CD4-positive, alpha-beta T cell (primary cell): ENCODE measurements at regions of chr2 and their contacts with region 1.

Region 1: DNA sequence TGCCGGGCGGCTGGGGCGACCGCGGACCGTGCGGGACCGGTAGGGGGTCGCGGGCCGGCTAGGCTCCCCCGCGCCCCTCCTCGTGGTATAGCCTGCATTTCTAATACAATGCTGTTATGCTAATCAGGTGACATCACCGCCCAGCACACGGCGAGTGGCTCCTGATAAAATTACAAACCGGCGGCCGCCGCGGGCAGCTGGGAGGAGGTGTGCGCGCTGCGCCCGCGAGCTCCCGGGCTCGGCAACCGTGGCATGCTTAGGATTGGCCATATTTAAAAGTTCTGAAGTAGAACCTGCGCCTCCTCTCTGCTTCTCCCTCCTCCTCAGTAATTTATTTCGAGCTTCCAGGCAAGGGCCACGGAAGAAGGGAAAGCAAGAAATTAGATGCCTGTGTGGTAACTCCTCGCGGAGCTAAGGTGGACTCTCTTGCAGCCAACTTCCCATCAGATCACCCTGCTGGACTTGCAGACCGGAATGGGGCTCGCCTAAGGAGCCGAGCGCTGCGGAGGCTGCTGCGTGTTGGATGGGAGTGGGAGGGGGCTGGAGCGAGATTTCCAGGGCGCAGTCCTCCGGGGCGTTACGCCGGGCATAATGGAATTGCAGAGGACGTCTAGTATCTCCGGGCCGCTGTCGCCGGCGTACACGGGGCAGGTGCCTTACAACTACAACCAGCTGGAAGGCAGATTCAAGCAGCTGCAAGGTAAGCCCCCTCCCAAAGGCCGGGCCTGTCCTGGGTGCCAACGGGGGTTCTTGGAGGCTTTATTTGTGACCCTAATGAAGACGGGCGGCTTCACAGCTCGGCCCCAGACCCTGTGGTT is 102.3 kb downstream of the SPTBN1 start:
- DNase-seq: peak; percentile 35 to 88 (median 62)
- ATAC-seq: peak; percentile 66
- H3K4me3 ChIP-seq: peak overlapping the region; percentile 72
- H3K4me3 Mint-ChIP-seq: peak overlapping the region; percentile 98
- H3K27ac ChIP-seq: peak overlapping the region; percentile 75 to 89
- H3K27ac Mint-ChIP-seq: peak overlapping the region; percentile 95
- H3K4me1 ChIP-seq: peaks cover 30% of the 10 kb centered on the region
- H3K4me1 Mint-ChIP-seq: peaks cover 72% of the 10 kb centered on the region
- H3K27me3 ChIP-seq: no peaks in the 10 kb centered on the region
- H3K27me3 Mint-ChIP-seq: no peaks in the 10 kb centered on the region
- CTCF ChIP-seq: no peak

Region 2: DNA sequence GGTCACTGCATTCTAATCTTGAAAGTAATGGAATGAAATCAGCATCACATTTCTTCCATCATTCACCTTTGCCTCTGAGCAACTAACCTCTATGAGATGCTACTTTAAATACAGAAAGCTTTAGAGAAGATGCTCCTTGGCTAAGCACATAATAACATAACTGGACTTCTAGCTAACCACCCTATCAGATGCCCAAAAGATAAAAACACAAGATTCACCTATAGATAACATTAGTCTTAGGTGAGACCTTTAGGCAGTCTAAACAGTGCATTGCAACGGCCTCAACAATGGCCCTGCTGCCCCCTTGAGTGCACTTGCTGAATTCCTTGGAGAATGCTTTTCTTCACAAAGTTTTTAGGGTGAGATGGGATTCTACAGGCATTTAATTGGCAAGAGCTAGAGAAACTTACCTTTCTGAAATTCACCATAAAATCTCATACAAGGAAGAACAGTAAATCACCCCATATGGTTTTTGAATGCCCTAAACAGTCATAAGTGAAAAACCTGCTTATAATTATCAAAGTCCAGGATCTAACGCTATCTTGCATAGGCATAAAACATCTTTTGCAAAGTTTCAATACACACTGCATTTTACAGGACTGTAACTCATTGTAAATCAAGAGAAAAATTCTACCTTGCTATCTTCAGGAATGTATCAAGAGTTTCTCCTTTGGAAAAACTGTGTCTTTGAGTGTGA is 1582.0 kb before region 1 on chr2:
- CTCF ChIA-PET with region 1: no interaction called
- POLR2A ChIA-PET with region 1: no interaction called
- intact Hi-C with region 1: no loop called
- DNase-seq: no peak
- ATAC-seq: no peak
- H3K4me3 ChIP-seq: no peak overlapping the region
- H3K4me3 Mint-ChIP-seq: no peak overlapping the region
- H3K27ac ChIP-seq: no peak overlapping the region
- H3K27ac Mint-ChIP-seq: no peak overlapping the region
- H3K4me1 ChIP-seq: no peaks in the 10 kb centered on the region
- H3K4me1 Mint-ChIP-seq: no peaks in the 10 kb centered on the region
- H3K27me3 ChIP-seq: no peaks in the 10 kb centered on the region
- H3K27me3 Mint-ChIP-seq: no peaks in the 10 kb centered on the region
- CTCF ChIP-seq: no peak

Region 3: GRCh38 chr2:54546923-54547720 is 11.3 kb before region 1 on chr2:
- CTCF ChIA-PET with region 1: no interaction called
- POLR2A ChIA-PET with region 1: interaction called, 13 read pairs
- intact Hi-C with region 1: no loop called
- DNase-seq: no peak
- ATAC-seq: no peak
- H3K4me3 ChIP-seq: no peak overlapping the region
- H3K4me3 Mint-ChIP-seq: no peak overlapping the region
- H3K27ac ChIP-seq: no peak overlapping the region
- H3K27ac Mint-ChIP-seq: no peak overlapping the region
- H3K4me1 ChIP-seq: no peaks in the 10 kb centered on the region
- H3K4me1 Mint-ChIP-seq: no peaks in the 10 kb centered on the region
- H3K27me3 ChIP-seq: no peaks in the 10 kb centered on the region
- H3K27me3 Mint-ChIP-seq: no peaks in the 10 kb centered on the region
- CTCF ChIP-seq: no peak

Region 4: DNA sequence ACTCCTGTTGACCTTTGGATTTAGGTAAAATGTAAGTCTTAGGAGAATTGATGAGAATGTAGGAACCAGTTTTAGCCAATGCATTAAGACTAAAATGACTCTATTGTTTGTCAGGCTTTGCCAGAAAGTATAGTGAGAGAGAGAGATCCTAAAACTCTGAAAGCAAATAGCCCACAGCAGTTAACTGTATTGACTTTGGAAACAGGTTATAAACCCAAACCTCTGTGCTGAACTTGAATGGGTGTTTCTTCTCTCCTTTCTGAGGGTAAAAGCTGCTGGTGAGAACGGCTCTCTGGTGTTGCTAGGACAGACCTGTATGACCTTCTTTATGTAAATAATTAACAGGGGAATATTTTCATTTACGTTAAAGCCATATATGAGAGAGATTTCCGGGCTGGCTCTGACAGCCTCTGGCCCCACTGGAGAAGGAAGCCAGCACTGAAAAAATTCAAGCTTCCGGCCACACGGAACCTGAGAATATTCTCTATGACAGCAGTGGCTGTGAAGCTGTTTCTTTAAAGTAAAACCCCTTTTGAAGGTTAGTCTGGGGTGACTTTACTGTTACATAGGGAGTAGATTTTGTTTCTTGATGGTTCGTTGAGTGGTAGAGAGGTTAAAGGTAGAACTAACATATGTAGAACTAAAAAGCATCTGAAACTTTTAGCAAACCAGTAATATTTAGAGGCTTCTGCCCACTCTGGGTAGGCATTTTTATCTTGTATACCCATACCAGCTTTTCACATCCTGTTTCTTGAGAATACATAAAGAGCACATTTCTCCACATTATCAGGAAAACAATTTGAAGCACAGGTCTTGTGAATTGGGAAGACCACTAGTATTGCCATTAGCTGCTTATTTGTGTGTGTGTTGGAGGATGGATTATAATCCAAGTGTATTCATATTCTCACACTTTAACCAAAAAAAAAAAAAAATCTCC is 21.6 kb after region 1 on chr2:
- CTCF ChIA-PET with region 1: interaction called, 25 read pairs
- POLR2A ChIA-PET with region 1: interaction called, 158 read pairs
- intact Hi-C with region 1: loop called in 1 of 2 experiments (anchors 2 kb)
- DNase-seq: peak in 11 of 14 experiments; percentile 38 to 82 (median 46)
- ATAC-seq: peak; percentile 53
- H3K4me3 ChIP-seq: peak overlapping the region; percentile 8
- H3K4me3 Mint-ChIP-seq: peak overlapping the region; percentile 70
- H3K27ac ChIP-seq: peak overlapping the region; percentile 75 to 89
- H3K27ac Mint-ChIP-seq: peak overlapping the region; percentile 96
- H3K4me1 ChIP-seq: peaks cover 87% of the 10 kb centered on the region
- H3K4me1 Mint-ChIP-seq: peaks cover 98% of the 10 kb centered on the region
- H3K27me3 ChIP-seq: no peaks in the 10 kb centered on the region
- H3K27me3 Mint-ChIP-seq: no peaks in the 10 kb centered on the region
- CTCF ChIP-seq: no peak

Region 5: GRCh38 chr2:54597153-54597848 is 38.9 kb after region 1 on chr2:
- CTCF ChIA-PET with region 1: interaction called, 8 read pairs
- POLR2A ChIA-PET with region 1: interaction called, 39 read pairs
- intact Hi-C with region 1: loop called (anchors 1 to 5 kb)
- DNase-seq: peak in 4 of 14 experiments; percentile 4 to 54 (median 46)
- ATAC-seq: peak; percentile 27
- H3K4me3 ChIP-seq: peak overlapping the region; percentile 13
- H3K4me3 Mint-ChIP-seq: peak overlapping the region; percentile 87
- H3K27ac ChIP-seq: peak overlapping the region; percentile 49 to 69
- H3K27ac Mint-ChIP-seq: peak overlapping the region; percentile 96
- H3K4me1 ChIP-seq: peaks cover 84% of the 10 kb centered on the region
- H3K4me1 Mint-ChIP-seq: peaks cover 98% of the 10 kb centered on the region
- H3K27me3 ChIP-seq: no peaks in the 10 kb centered on the region
- H3K27me3 Mint-ChIP-seq: no peaks in the 10 kb centered on the region
- CTCF ChIP-seq: no peak

Region 6: GRCh38 chr2:54618646-54619565 is 60.5 kb after region 1 on chr2:
- CTCF ChIA-PET with region 1: interaction called, 7 read pairs
- POLR2A ChIA-PET with region 1: interaction called, 18 read pairs
- intact Hi-C with region 1: no loop called
- DNase-seq: peak in 1 of 14 experiments; percentile 29
- ATAC-seq: no peak
- H3K4me3 ChIP-seq: no peak overlapping the region
- H3K4me3 Mint-ChIP-seq: peak overlapping the region; percentile 6
- H3K27ac ChIP-seq: no peak overlapping the region
- H3K27ac Mint-ChIP-seq: peak overlapping the region; percentile 68
- H3K4me1 ChIP-seq: peaks cover 7% of the 10 kb centered on the region
- H3K4me1 Mint-ChIP-seq: peaks cover 50% of the 10 kb centered on the region
- H3K27me3 ChIP-seq: no peaks in the 10 kb centered on the region
- H3K27me3 Mint-ChIP-seq: no peaks in the 10 kb centered on the region
- CTCF ChIP-seq: no peak

Region 7: GRCh38 chr2:54704688-54705605 is 146.6 kb after region 1 on chr2:
- CTCF ChIA-PET with region 1: interaction called, 3 read pairs
- POLR2A ChIA-PET with region 1: interaction called, 10 read pairs
- intact Hi-C with region 1: no loop called
- DNase-seq: peak in 3 of 14 experiments; percentile 73 to 78 (median 78)
- ATAC-seq: peak; percentile 72
- H3K4me3 ChIP-seq: no peak overlapping the region
- H3K4me3 Mint-ChIP-seq: no peak overlapping the region
- H3K27ac ChIP-seq: no peak overlapping the region
- H3K27ac Mint-ChIP-seq: no peak overlapping the region
- H3K4me1 ChIP-seq: peaks cover 12% of the 10 kb centered on the region
- H3K4me1 Mint-ChIP-seq: no peaks in the 10 kb centered on the region
- H3K27me3 ChIP-seq: peaks cover 17 to 23% of the 10 kb centered on the region in 2 experiments
- H3K27me3 Mint-ChIP-seq: peaks cover 16% of the 10 kb centered on the region
- CTCF ChIP-seq: peak; percentile 77

Region 8: GRCh38 chr2:55672630-55673029 is 1114.2 kb after region 1 on chr2:
- CTCF ChIA-PET with region 1: no interaction called
- POLR2A ChIA-PET with region 1: no interaction called
- intact Hi-C with region 1: no loop called
- DNase-seq: no peak
- ATAC-seq: no peak
- H3K4me3 ChIP-seq: no peak overlapping the region
- H3K4me3 Mint-ChIP-seq: no peak overlapping the region
- H3K27ac ChIP-seq: no peak overlapping the region
- H3K27ac Mint-ChIP-seq: no peak overlapping the region
- H3K4me1 ChIP-seq: no peaks in the 10 kb centered on the region
- H3K4me1 Mint-ChIP-seq: no peaks in the 10 kb centered on the region
- H3K27me3 ChIP-seq: no peaks in the 10 kb centered on the region
- H3K27me3 Mint-ChIP-seq: no peaks in the 10 kb centered on the region
- CTCF ChIP-seq: no peak